Gastrocnemius medialis (tissue), 4 donors: ENCODE measurements at regions of chr17 and their contacts with region 1.

Region 1: DNA sequence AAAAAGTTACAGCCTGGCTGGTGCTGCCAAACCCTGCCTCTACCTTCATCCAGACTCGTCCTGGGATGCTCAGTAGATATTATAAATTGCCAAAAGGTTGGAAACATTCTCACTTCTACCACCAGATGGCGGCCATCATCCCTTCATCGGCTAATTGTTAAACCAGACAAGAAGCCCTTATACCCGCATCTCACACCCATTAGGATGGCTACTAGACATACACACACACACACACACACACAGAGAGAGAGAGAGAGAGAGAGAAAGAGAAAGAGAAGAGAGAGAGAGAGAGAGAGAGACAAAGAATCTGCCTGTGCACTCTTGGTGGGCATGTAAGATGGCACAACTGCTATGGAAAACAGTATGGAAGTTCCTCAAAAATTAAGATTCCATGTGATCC is 15.0 kb upstream of the SCIMP start:
- DNase-seq: peak; percentile 19 to 46
- ATAC-seq: peak; percentile 72 to 85
- H3K4me3 ChIP-seq: no peak overlapping the region
- H3K27ac ChIP-seq: no peak overlapping the region
- H3K4me1 ChIP-seq: no peaks in the 10 kb centered on the region
- H3K27me3 ChIP-seq: no peaks in the 10 kb centered on the region
- CTCF ChIP-seq: peak; percentile 51 to 66 (median 65)
- POLR2A ChIP-seq: no peak

Region 2: GRCh38 chr17:5304636-5305035 is 55.0 kb after region 1 on chr17:
- in situ Hi-C with region 1: no loop called
- intact Hi-C with region 1: loop called (anchors 2 kb)
- DNase-seq: no peak
- ATAC-seq: no peak
- H3K4me3 ChIP-seq: no peak overlapping the region
- H3K27ac ChIP-seq: no peak overlapping the region
- H3K4me1 ChIP-seq: peaks cover 14 to 46% of the 10 kb centered on the region in 2 donors
- H3K27me3 ChIP-seq: no peaks in the 10 kb centered on the region
- CTCF ChIP-seq: no peak
- POLR2A ChIP-seq: no peak

Region 3: DNA sequence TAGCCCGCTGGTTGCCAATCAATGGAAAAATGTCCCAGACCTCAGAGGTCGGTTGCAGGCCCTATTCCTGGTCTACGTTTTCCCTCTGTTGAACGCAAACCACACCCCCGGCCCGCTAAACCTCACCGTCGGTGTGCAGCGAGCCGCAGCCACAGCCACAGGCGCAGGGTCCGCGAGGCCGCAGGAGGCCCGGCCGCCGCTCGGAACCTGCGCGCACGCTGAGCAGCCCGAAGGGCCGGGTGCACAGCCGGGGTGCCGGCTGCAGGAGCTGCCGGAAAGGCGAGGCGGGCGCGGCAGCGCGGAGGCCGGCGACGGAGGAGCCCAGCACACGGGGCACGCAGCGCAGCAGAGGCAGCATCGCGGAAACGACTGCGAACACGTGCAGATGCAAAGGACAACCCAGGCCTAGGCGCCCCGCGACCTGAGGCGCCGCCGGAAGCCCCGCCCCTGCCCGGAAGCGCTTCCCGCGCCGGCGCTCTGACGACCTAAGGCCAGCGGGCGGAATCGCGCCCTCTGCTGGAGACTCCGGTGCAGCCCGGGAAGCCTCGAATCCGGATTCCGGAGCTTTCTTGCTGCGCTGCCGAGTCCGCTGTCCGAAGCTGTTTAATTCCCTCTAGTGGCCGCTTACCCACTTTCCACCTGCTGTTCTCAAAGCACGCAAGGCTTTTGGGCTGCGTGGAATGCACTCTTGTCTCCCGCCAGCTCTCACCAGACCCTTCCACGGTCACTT is 189.3 kb after region 1 on chr17 and contains the start of gene C1QBP:
- in situ Hi-C with region 1: loop called in 1 of 4 experiments (anchors 25 kb)
- intact Hi-C with region 1: loop called (anchors 1 kb)
- DNase-seq: peak; percentile 70 to 87
- ATAC-seq: peak; percentile 97 to 98
- H3K4me3 ChIP-seq: peak within 1 kb of the TSS; percentile 69 to 88 (median 78)
- H3K27ac ChIP-seq: peak within 1 kb of the TSS; percentile 77 to 86 (median 83)
- H3K4me1 ChIP-seq: peaks cover 19% of the 10 kb centered on the region in 2 donors
- H3K27me3 ChIP-seq: no peaks in the 10 kb centered on the region
- CTCF ChIP-seq: peak; percentile 98 to 100 (median 99)
- POLR2A ChIP-seq: peak; percentile 49 to 59
- total RNA-seq, gene C1QBP: 102 to 200 (median 134) TPM

Region 4: DNA sequence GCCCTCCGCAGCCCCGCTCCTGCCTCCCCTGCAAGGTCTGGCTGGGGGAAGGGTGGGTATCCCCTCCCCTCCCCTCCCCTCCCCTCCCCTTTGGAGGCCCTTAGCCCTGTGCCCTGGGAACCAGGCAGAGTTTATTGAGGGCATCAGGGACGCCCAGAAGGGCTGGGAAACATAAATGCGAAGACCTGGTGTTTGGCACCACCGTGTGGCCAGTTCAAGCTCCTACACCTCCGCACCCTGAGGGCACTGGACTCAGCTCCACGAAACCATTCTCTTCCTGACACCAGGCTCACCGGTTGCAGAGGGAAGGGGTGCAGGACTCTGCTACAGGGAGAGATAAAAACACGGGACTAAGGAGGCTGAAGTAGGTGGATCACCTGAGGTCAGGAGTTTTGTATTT is 1186.4 kb after region 1 on chr17:
- in situ Hi-C with region 1: loop called in 1 of 4 experiments (anchors 25 kb)
- intact Hi-C with region 1: loop called (anchors 10 kb)
- DNase-seq: peak; percentile 17 to 43
- ATAC-seq: peak; percentile 80 to 86
- H3K4me3 ChIP-seq: no peak overlapping the region
- H3K27ac ChIP-seq: no peak overlapping the region
- H3K4me1 ChIP-seq: no peaks in the 10 kb centered on the region
- H3K27me3 ChIP-seq: peaks cover 4 to 7% (median 5%) of the 10 kb centered on the region in 3 donors
- CTCF ChIP-seq: peak; percentile 61 to 79 (median 71)
- POLR2A ChIP-seq: no peak

Region 5: GRCh38 chr17:6443692-6444569 is 1194.3 kb after region 1 on chr17 and contains the start of gene PIMREG:
- in situ Hi-C with region 1: loop called in 1 of 4 experiments (anchors 25 kb)
- intact Hi-C with region 1: loop called (anchors 10 kb)
- DNase-seq: peak; percentile 85 to 86
- ATAC-seq: peak; percentile 95 to 96
- H3K4me3 ChIP-seq: peak within 1 kb of the TSS; percentile 47 to 79 (median 56)
- H3K27ac ChIP-seq: no peak within 1 kb of the TSS
- H3K4me1 ChIP-seq: peaks cover 0 to 15% of the 10 kb centered on the region in 2 donors
- H3K27me3 ChIP-seq: peaks cover 0 to 13% (median 4%) of the 10 kb centered on the region in 3 donors
- CTCF ChIP-seq: no peak
- POLR2A ChIP-seq: no peak
- total RNA-seq, gene PIMREG: 0.51 TPM in 1 of 4 donors, not detected in the others